ENCODE measurements at regions of chr7 and their contacts with region 1.

Region 1: DNA sequence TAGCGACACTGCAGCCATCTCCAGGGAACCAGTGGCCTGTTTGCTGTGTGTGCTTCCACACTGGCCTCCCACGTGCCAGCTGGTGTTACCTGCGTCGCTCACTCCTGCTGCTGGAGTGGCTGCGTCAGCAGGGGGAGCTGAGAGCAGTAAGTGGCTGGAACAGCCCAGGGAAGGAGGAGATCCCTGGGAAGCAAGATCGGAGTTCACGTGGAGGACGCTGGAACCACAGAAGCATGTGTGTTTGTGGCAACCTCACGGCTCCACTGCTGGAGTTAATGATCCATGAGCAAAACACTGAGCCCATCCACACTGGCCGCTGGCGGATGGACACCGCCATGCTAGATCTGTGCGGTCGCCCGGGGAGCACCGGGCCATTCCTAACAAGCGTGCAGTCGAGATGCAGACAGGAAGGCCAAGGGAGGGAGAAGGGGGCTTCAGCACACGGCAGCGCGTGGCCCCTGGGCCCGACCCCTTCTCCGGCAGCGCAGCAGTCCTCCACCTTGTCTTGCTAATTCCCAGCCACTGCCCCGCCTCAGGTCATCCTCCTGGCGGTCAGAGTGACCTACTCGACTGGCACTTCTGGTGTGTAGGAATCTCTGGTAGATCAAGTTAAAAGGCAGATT is 68.5 kb upstream of the EEPD1 start:
- DNase-seq: peak; percentile 16 to 57 (median 41)
- H3K4me3 ChIP-seq: no peak overlapping the region
- H3K27ac ChIP-seq: no peak overlapping the region
- H3K4me1 ChIP-seq: no peaks in the 10 kb centered on the region
- H3K27me3 ChIP-seq: no peaks in the 10 kb centered on the region
- CTCF ChIP-seq: no peak
- EP300 ChIP-seq: no peak
- POLR2A ChIP-seq: no peak

Region 2: GRCh38 chr7:35405461-35405860 is 679.1 kb before region 1 on chr7:
- intact Hi-C with region 1: loop called in 1 of 4 experiments (anchors 5 kb)
- DNase-seq: no peak
- H3K4me3 ChIP-seq: no peak overlapping the region
- H3K27ac ChIP-seq: no peak overlapping the region
- H3K4me1 ChIP-seq: no peaks in the 10 kb centered on the region
- H3K27me3 ChIP-seq: no peaks in the 10 kb centered on the region
- CTCF ChIP-seq: no peak
- EP300 ChIP-seq: no peak
- POLR2A ChIP-seq: no peak